ENCODE measurements at regions of chr4 and their contacts with region 1.

Region 1: DNA sequence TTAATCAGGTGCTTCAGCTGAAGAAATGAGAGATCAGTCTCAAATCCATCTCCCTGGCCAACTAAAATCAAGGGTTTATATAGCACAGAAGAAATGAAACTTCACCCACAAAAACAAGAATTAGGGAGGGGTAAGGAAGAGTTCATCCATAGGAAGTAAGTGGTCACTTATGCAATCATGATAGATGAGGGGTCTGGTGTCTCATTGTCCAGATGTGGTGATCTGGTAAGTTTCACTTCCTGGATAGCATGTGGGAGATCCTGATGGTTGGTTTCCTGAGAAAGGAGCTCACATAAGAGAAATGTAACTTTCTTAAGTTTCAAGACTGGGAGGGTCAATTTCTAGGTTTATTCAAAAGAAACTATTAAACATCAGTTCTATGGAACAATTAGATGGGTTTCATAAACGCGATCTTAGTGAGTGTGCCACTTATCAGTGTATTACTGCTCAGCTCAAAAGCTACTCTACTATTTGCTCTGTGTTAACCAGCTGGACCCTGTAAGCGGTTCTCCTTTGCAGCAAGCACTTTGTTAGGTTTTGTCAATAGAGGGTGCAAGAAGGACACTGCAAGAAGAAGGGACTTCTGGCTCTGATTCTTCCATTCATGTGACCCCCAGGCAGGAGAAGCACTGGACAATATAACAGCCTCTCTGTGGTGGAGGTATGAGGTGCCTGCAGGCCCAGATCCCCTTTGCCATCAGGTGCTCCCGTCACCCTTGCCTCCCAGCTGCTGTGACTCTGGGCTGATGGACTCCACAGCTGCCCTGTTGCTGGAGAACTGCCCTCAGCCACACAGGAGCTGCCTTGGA is 35.4 kb upstream of the HPSE start:
- DNase-seq: no peak
- H3K4me3 Mint-ChIP-seq: no peak overlapping the region
- H3K27ac Mint-ChIP-seq: no peak overlapping the region
- H3K4me1 Mint-ChIP-seq: no peaks in the 10 kb centered on the region
- H3K27me3 Mint-ChIP-seq: no peaks in the 10 kb centered on the region

Region 2: GRCh38 chr4:83297548-83298260 is 72.3 kb before region 1 on chr4:
- CTCF ChIA-PET with region 1: no interaction called
- intact Hi-C with region 1: loop called (anchors 5 kb)
- DNase-seq: no peak
- H3K4me3 Mint-ChIP-seq: no peak overlapping the region
- H3K27ac Mint-ChIP-seq: no peak overlapping the region
- H3K4me1 Mint-ChIP-seq: peaks cover 4% of the 10 kb centered on the region
- H3K27me3 Mint-ChIP-seq: no peaks in the 10 kb centered on the region

Measured in activated naive CD4-positive, alpha-beta T cell treated with anti-CD3 and anti-CD28 coated beads for 36 hours (primary cell).